CD4-positive, alpha-beta memory T cell (primary cell): ENCODE measurements at regions of chr1 and their contacts with region 1.

Region 1: GRCh38 chr1:26233903-26234643 is at the start of gene CEP85:
- DNase-seq: peak; percentile 98 to 99 (median 98)
- H3K4me3 ChIP-seq: peak within 1 kb of the TSS; percentile 90 to 97
- H3K4me3 Mint-ChIP-seq: peak within 1 kb of the TSS; percentile 92 to 100 (median 98)
- H3K27ac ChIP-seq: peak within 1 kb of the TSS; percentile 77
- H3K27ac Mint-ChIP-seq: peak within 1 kb of the TSS; percentile 84 to 100 (median 97)
- H3K4me1 ChIP-seq: peaks cover 26% of the 10 kb centered on the region
- H3K4me1 Mint-ChIP-seq: peaks cover 18 to 43% (median 33%) of the 10 kb centered on the region in 4 donors
- H3K27me3 ChIP-seq: no peaks in the 10 kb centered on the region
- H3K27me3 Mint-ChIP-seq: peaks cover 0 to 1% of the 10 kb centered on the region in 2 donors
- total RNA-seq, gene CEP85: 20.4 to 21.9 TPM

Region 2: GRCh38 chr1:25922056-25922969 is 311.8 kb before region 1 on chr1:
- CTCF ChIA-PET with region 1: no interaction called
- POLR2A ChIA-PET with region 1: no interaction called
- intact Hi-C with region 1: no loop called
- DNase-seq: peak; percentile 46 to 60 (median 57)
- H3K4me3 ChIP-seq: peak overlapping the region; percentile 17 to 54
- H3K4me3 Mint-ChIP-seq: peak overlapping the region; percentile 85 to 92 (median 88)
- H3K27ac ChIP-seq: no peak overlapping the region
- H3K27ac Mint-ChIP-seq: peak overlapping the region; percentile 49 to 90 (median 65)
- H3K4me1 ChIP-seq: peaks cover 36% of the 10 kb centered on the region
- H3K4me1 Mint-ChIP-seq: peaks cover 19 to 33% (median 23%) of the 10 kb centered on the region in 4 donors
- H3K27me3 ChIP-seq: no peaks in the 10 kb centered on the region
- H3K27me3 Mint-ChIP-seq: peaks cover 2 to 3% of the 10 kb centered on the region in 2 donors

Region 3: DNA sequence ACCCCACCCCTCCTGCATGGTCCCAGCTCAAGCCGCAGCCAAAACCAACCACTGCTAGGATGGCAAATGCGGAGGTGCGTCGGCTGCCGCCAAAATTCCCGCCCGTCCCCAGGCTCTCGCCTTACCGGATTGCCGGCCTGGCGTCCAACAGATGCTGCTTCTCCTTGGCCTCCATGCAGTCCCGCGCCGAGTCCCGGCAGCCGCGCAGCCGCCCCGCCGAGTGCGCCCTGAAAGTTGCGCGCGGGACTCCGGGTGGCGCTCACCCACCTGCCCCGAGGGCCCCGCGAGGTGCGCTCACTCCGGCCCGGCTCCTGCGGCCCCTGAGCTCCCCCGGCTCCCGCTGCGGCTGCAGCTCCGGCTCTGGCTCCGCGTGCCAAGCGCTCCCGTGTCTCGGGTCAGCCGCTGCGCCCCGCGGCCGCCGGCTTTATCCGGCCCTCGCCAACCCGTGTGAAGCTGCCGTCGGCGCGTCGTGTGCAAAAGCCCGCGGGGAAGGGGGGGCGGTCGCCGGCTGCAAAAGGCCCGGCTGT is 188.3 kb before region 1 on chr1 and contains the start of gene SLC30A2:
- CTCF ChIA-PET with region 1: no interaction called
- POLR2A ChIA-PET with region 1: no interaction called
- intact Hi-C with region 1: no loop called
- DNase-seq: no peak
- H3K4me3 ChIP-seq: no peak within 1 kb of the TSS
- H3K4me3 Mint-ChIP-seq: peak within 1 kb of the TSS in 3 of 8 donors; percentile 10 to 25 (median 11)
- H3K27ac ChIP-seq: no peak within 1 kb of the TSS
- H3K27ac Mint-ChIP-seq: no peak within 1 kb of the TSS
- H3K4me1 ChIP-seq: no peaks in the 10 kb centered on the region
- H3K4me1 Mint-ChIP-seq: peaks cover 0 to 11% (median 0%) of the 10 kb centered on the region in 4 donors
- H3K27me3 ChIP-seq: peaks cover 20% of the 10 kb centered on the region
- H3K27me3 Mint-ChIP-seq: peaks cover 45 to 52% of the 10 kb centered on the region in 2 donors
- total RNA-seq, gene SLC30A2: not detected

Region 4: GRCh38 chr1:26145041-26145959 is 88.8 kb before region 1 on chr1:
- CTCF ChIA-PET with region 1: interaction called, 19 read pairs
- POLR2A ChIA-PET with region 1: interaction called, 3 read pairs
- intact Hi-C with region 1: no loop called
- DNase-seq: peak; percentile 70 to 76 (median 72)
- H3K4me3 ChIP-seq: no peak overlapping the region
- H3K4me3 Mint-ChIP-seq: peak overlapping the region in 2 of 8 donors; percentile 58 to 66
- H3K27ac ChIP-seq: no peak overlapping the region
- H3K27ac Mint-ChIP-seq: peak overlapping the region in 2 of 7 donors; percentile 22 to 36
- H3K4me1 ChIP-seq: peaks cover 8% of the 10 kb centered on the region
- H3K4me1 Mint-ChIP-seq: peaks cover 4 to 7% (median 5%) of the 10 kb centered on the region in 4 donors
- H3K27me3 ChIP-seq: no peaks in the 10 kb centered on the region
- H3K27me3 Mint-ChIP-seq: peaks cover 6 to 8% of the 10 kb centered on the region in 2 donors

Region 5: GRCh38 chr1:26210147-26210870 is 23.8 kb before region 1 on chr1:
- CTCF ChIA-PET with region 1: interaction called, 10 read pairs
- POLR2A ChIA-PET with region 1: no interaction called
- intact Hi-C with region 1: no loop called
- DNase-seq: no peak
- H3K4me3 ChIP-seq: no peak overlapping the region
- H3K4me3 Mint-ChIP-seq: no peak overlapping the region
- H3K27ac ChIP-seq: no peak overlapping the region
- H3K27ac Mint-ChIP-seq: peak overlapping the region in 4 of 7 donors; percentile 1 to 45 (median 8)
- H3K4me1 ChIP-seq: no peaks in the 10 kb centered on the region
- H3K4me1 Mint-ChIP-seq: no peaks in the 10 kb centered on the region
- H3K27me3 ChIP-seq: no peaks in the 10 kb centered on the region
- H3K27me3 Mint-ChIP-seq: no peaks in the 10 kb centered on the region

Region 6: GRCh38 chr1:26284597-26285360 is 50.7 kb after region 1 on chr1:
- CTCF ChIA-PET with region 1: interaction called, 18 read pairs
- POLR2A ChIA-PET with region 1: interaction called, 29 read pairs
- intact Hi-C with region 1: loop called (anchors 2 kb)
- DNase-seq: peak; percentile 91 to 99 (median 92)
- H3K4me3 ChIP-seq: peak overlapping the region; percentile 38 to 50
- H3K4me3 Mint-ChIP-seq: peak overlapping the region; percentile 82 to 94 (median 89)
- H3K27ac ChIP-seq: peak overlapping the region; percentile 91
- H3K27ac Mint-ChIP-seq: peak overlapping the region; percentile 94 to 100 (median 99)
- H3K4me1 ChIP-seq: peaks cover 95% of the 10 kb centered on the region
- H3K4me1 Mint-ChIP-seq: peaks cover 63 to 96% (median 81%) of the 10 kb centered on the region in 4 donors
- H3K27me3 ChIP-seq: no peaks in the 10 kb centered on the region
- H3K27me3 Mint-ChIP-seq: no peaks in the 10 kb centered on the region

Region 7: DNA sequence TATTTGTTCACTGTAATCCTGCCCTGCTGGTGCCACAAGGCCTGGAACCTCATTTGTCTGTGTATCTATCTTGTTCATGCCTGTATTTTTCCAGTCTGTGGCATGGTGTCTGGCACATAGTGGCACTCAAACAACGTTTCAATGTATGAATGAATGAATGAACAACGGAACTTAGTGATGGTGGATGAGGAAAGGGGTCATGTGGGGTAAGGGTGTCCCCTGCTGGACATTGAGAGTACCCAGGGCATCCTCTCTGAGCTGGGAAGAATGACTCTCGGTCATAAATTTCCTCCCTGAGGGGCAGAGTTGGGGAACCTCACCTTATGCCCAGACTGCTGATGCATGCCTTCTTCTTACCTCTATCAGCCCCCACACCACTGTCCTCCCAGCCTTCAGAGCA is 157.4 kb after region 1 on chr1:
- CTCF ChIA-PET with region 1: interaction called, 17 read pairs
- POLR2A ChIA-PET with region 1: no interaction called
- intact Hi-C with region 1: no loop called
- DNase-seq: peak; percentile 52 to 63 (median 56)
- H3K4me3 ChIP-seq: no peak overlapping the region
- H3K4me3 Mint-ChIP-seq: peak overlapping the region in 2 of 8 donors; percentile 1 to 43
- H3K27ac ChIP-seq: no peak overlapping the region
- H3K27ac Mint-ChIP-seq: peak overlapping the region in 3 of 7 donors; percentile 51 to 75 (median 59)
- H3K4me1 ChIP-seq: peaks cover 42% of the 10 kb centered on the region
- H3K4me1 Mint-ChIP-seq: peaks cover 24 to 40% (median 28%) of the 10 kb centered on the region in 4 donors
- H3K27me3 ChIP-seq: no peaks in the 10 kb centered on the region
- H3K27me3 Mint-ChIP-seq: no peaks in the 10 kb centered on the region

Region 8: GRCh38 chr1:26472901-26473845 is 239.1 kb after region 1 on chr1:
- CTCF ChIA-PET with region 1: no interaction called
- POLR2A ChIA-PET with region 1: interaction called, 3 read pairs
- intact Hi-C with region 1: loop called (anchors 1 kb)
- DNase-seq: peak; percentile 95 to 96 (median 95)
- H3K4me3 ChIP-seq: peak overlapping the region; percentile 53 to 85
- H3K4me3 Mint-ChIP-seq: peak overlapping the region; percentile 83 to 92 (median 89)
- H3K27ac ChIP-seq: peak overlapping the region; percentile 96
- H3K27ac Mint-ChIP-seq: peak overlapping the region; percentile 82 to 100 (median 93)
- H3K4me1 ChIP-seq: peaks cover 49% of the 10 kb centered on the region
- H3K4me1 Mint-ChIP-seq: peaks cover 33 to 66% (median 46%) of the 10 kb centered on the region in 4 donors
- H3K27me3 ChIP-seq: no peaks in the 10 kb centered on the region
- H3K27me3 Mint-ChIP-seq: no peaks in the 10 kb centered on the region

Region 9: DNA sequence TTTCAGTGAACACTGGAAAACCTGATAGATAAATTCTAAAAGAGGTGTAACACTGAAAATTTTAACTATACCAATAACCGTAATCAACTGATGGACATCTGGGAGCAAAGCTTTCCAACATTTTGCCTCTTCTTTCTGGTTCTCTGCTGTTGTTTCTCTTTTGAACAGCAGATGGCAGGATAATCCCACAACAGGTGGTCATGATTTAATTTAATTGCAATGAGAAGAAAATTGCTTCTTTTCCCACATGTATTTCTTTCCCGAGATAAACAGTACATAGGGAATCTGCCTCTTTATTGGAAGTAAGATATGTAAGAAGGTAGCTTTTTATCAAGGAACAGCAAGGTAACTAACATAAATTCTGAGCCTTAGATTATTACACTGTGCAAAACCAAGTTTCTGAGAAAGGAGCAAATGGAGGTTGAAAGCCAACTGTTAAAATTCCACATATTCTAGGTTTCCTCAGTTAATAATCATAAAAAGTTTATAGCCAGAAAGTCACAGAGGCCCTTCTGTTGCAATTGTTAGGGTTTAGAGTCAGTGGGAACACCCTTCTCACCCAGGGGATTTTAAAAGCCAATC is 368.4 kb after region 1 on chr1:
- CTCF ChIA-PET with region 1: no interaction called
- POLR2A ChIA-PET with region 1: no interaction called
- intact Hi-C with region 1: no loop called
- DNase-seq: peak; percentile 52 to 72 (median 70)
- H3K4me3 ChIP-seq: no peak overlapping the region
- H3K4me3 Mint-ChIP-seq: no peak overlapping the region
- H3K27ac ChIP-seq: no peak overlapping the region
- H3K27ac Mint-ChIP-seq: peak overlapping the region in 1 of 7 donors; percentile 35
- H3K4me1 ChIP-seq: peaks cover 10% of the 10 kb centered on the region
- H3K4me1 Mint-ChIP-seq: peaks cover 6 to 9% (median 7%) of the 10 kb centered on the region in 4 donors
- H3K27me3 ChIP-seq: no peaks in the 10 kb centered on the region
- H3K27me3 Mint-ChIP-seq: no peaks in the 10 kb centered on the region

Region 10: DNA sequence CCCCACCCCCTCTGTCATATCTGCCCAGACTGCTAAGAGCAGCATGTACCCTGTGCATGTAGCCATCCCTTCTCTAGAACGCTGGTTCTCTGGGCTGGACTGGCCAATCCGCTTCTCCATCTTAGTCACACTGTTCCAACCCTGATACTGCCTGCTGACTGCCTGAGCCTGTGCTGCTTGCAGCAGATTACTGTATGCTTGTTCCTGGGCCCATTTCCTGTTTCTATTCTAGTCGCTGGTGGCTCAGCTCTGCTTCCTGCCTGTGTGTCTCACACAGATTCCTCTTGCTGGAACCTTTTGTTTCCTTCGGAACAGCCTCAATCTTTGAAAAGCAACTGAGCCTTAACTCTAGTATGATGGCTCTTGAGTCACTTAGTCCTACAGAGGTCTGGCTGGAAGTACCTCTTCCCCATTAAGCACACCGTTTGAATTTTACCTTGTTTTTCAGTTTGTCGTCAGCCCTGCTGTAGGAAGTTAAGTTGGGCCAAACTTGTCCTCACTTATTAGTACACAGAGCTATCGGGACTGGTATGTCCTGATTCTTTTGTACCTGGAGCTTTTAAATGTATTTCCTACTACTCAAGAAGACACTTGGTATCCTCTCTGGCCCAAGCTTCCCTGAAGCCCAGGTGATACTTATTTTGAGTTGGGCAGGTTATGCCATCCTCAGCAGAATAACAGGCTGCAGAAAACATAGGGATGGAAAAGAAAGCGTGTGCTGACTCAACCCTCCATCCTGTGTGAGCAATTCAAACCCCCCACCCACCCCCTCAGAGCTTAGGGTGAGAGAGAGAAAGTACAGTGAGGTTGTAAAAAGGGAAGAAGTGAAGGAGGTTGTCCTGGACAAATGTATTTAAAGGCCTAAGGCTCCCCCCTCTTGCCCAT is 510.2 kb after region 1 on chr1:
- CTCF ChIA-PET with region 1: no interaction called
- POLR2A ChIA-PET with region 1: no interaction called
- intact Hi-C with region 1: no loop called
- DNase-seq: peak; percentile 81 to 93 (median 88)
- H3K4me3 ChIP-seq: peak overlapping the region in 1 of 2 donors; percentile 41
- H3K4me3 Mint-ChIP-seq: peak overlapping the region; percentile 5 to 90 (median 79)
- H3K27ac ChIP-seq: peak overlapping the region; percentile 70
- H3K27ac Mint-ChIP-seq: peak overlapping the region; percentile 90 to 98 (median 93)
- H3K4me1 ChIP-seq: peaks cover 95% of the 10 kb centered on the region
- H3K4me1 Mint-ChIP-seq: peaks cover 66 to 93% (median 79%) of the 10 kb centered on the region in 4 donors
- H3K27me3 ChIP-seq: no peaks in the 10 kb centered on the region
- H3K27me3 Mint-ChIP-seq: no peaks in the 10 kb centered on the region